ENCODE measurements at regions of chr19 and their contacts with region 1.

Region 1: DNA sequence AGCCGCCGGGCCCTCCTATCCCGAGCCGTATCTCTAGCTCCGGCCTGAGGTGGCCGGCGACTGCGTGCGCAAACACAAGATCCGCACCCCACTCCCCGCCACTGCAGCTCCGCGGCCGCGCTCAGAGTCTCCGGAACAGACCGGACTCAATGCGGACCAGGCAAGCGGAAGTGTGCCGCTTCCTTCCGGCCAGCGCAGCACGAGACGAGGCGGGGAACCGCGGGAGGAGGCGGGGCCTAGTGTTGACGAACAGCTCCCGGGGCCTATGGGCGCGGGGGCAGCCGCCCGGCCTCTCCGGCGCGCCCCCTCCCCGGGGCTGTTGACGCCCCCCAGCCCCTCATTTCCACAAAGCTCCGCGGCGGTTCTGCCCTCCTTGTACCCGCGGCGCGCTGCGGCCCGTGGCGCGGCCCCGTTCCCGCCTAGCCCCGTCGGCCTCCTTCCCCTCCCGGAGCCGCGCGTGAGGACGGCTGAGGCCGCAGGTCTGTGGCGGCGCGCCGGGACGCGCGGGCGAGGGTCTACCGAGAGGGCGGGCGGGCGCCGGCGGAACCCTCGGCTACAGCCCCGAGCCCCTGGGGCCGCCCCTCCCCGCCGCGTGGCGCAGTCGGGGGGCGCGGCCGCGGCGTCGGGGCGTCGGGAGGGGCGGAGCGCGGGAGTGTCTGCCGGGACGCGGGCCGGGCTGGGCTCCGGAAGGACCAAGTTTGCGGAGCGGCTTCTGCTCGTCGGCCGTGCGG is at the start of gene DPY19L3:
- DNase-seq: peak; percentile 98
- ATAC-seq: peak; percentile 99
- total RNA-seq, gene DPY19L3: 6.5 TPM

Region 2: DNA sequence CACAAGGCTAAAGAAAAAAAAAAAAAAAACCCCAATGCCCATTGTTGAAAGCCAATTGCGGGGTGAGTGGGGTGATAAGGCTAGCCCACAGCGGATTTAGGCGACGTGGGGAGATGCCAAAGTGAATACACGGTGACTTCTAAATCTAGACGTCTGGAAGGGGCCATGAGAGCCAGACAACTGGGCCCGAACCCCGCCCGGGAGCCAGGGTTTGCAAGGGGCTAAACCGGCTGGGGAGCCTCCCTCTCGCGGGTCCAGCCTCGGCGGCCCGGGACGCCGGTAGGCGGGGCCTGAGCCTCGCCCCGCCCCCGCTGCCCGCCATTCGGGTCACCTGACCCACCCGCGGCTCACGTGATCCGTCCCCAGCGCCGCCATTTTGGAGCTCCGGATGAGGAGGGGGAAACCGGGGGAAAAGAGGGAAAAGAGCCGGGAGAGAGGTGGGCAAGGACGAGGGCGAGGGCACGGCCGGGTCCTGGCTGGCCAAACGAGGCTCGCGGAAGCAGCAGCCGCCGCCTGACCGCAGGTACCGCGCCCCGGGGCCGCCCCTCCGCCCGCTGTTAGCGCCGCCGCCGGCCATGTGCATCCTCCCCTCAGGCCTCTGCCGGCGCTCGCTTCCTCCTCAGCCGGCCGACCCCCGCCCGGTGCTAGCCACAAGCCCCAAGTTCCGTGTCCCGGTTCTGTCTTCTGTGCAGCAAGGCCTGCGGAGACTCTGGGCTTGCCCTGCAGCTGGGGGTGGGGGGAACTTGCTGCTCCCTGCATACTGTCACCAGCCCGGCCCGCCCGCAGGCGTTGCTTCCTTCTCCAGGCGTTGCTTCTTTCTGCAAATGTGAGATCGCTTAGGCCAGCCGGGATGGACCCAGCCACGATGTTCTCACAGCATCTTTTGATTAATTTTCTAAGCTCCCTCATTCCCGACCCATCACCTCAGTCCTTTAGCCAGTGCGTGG is 60.1 kb before region 1 on chr19 and contains the start of gene ZNF507:
- intact Hi-C with region 1: loop called (anchors 10 kb)
- DNase-seq: peak; percentile 91
- ATAC-seq: peak; percentile 99
- total RNA-seq, gene ZNF507: 13.7 TPM

Region 3: GRCh38 chr19:32357720-32358119 is 47.9 kb before region 1 on chr19:
- intact Hi-C with region 1: no loop called
- DNase-seq: no peak
- ATAC-seq: no peak

Region 4: GRCh38 chr19:32464279-32464678 is 58.7 kb after region 1 on chr19:
- intact Hi-C with region 1: no loop called
- DNase-seq: no peak
- ATAC-seq: no peak

Measured in Right ventricle myocardium superior (tissue), 1 donor.